Psoas muscle (tissue), 8 donors: ENCODE measurements at regions of chr18 and their contacts with region 1.

Region 1: GRCh38 chr18:46574000-46574742 is 82.8 kb downstream of the LOXHD1 start:
- DNase-seq: no peak
- ATAC-seq: no peak
- H3K4me3 ChIP-seq: no peak overlapping the region
- H3K27ac ChIP-seq: no peak overlapping the region
- H3K4me1 ChIP-seq: no peaks in the 10 kb centered on the region
- H3K27me3 ChIP-seq: no peaks in the 10 kb centered on the region
- CTCF ChIP-seq: no peak

Region 2: GRCh38 chr18:46464926-46465655 is 109.1 kb before region 1 on chr18:
- intact Hi-C with region 1: no loop called
- DNase-seq: no peak
- ATAC-seq: no peak
- H3K4me3 ChIP-seq: no peak overlapping the region
- H3K27ac ChIP-seq: no peak overlapping the region
- H3K4me1 ChIP-seq: no peaks in the 10 kb centered on the region
- H3K27me3 ChIP-seq: no peaks in the 10 kb centered on the region
- CTCF ChIP-seq: peak; percentile 5

Region 3: DNA sequence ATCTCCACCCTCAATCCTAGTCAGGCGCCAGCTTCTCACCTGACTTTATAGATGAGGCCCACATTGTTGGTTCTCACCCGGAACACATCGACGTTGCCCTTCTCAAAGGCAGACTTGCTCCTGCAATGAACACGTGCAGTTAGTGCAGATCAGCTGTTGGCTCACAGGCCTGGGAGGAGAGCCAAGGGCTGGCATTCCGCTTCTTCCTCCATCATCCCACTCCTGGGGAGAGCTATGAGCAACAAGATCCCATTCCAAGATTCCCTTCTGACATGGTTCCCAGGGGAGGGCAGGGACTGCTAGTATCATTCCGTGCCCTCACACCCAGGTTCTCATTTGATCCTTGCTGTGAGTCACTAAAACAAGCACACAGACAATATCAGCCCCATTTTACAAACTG is 67.7 kb after region 1 on chr18:
- intact Hi-C with region 1: loop called in 1 of 2 experiments (anchors 10 kb)
- DNase-seq: no peak
- ATAC-seq: no peak
- H3K4me3 ChIP-seq: no peak overlapping the region
- H3K27ac ChIP-seq: no peak overlapping the region
- H3K4me1 ChIP-seq: no peaks in the 10 kb centered on the region
- H3K27me3 ChIP-seq: no peaks in the 10 kb centered on the region
- CTCF ChIP-seq: no peak